Caco-2 (cell line): ENCODE measurements at regions of chr11 and their contacts with region 1.

Region 1: GRCh38 chr11:121451986-121452608 is at the start of gene SORL1:
- DNase-seq: peak; percentile 88 to 94
- H3K4me3 ChIP-seq: peak within 1 kb of the TSS; percentile 47
- H3K4me3 Mint-ChIP-seq: peak within 1 kb of the TSS; percentile 90
- H3K27ac Mint-ChIP-seq: peak within 1 kb of the TSS; percentile 58
- H3K4me1 ChIP-seq: peaks cover 30% of the 10 kb centered on the region
- H3K4me1 Mint-ChIP-seq: peaks cover 28% of the 10 kb centered on the region
- H3K27me3 ChIP-seq: no peaks in the 10 kb centered on the region
- H3K27me3 Mint-ChIP-seq: no peaks in the 10 kb centered on the region
- CTCF ChIP-seq: peak; percentile 80 to 92
- total RNA-seq, gene SORL1: 26.3 and 34.0 TPM in 2 replicates

Region 2: GRCh38 chr11:121257992-121258391 is 194.1 kb before region 1 on chr11:
- CTCF ChIA-PET with region 1: no interaction called
- POLR2A ChIA-PET with region 1: no interaction called
- intact Hi-C with region 1: loop called (anchors 5 kb)
- DNase-seq: peak in 1 of 2 experiments; percentile 65
- H3K4me3 ChIP-seq: no peak overlapping the region
- H3K4me3 Mint-ChIP-seq: peak overlapping the region; percentile 4
- H3K27ac Mint-ChIP-seq: peak overlapping the region; percentile 20
- H3K4me1 ChIP-seq: peaks cover 21% of the 10 kb centered on the region
- H3K4me1 Mint-ChIP-seq: peaks cover 18% of the 10 kb centered on the region
- H3K27me3 ChIP-seq: no peaks in the 10 kb centered on the region
- H3K27me3 Mint-ChIP-seq: no peaks in the 10 kb centered on the region
- CTCF ChIP-seq: no peak

Region 3: DNA sequence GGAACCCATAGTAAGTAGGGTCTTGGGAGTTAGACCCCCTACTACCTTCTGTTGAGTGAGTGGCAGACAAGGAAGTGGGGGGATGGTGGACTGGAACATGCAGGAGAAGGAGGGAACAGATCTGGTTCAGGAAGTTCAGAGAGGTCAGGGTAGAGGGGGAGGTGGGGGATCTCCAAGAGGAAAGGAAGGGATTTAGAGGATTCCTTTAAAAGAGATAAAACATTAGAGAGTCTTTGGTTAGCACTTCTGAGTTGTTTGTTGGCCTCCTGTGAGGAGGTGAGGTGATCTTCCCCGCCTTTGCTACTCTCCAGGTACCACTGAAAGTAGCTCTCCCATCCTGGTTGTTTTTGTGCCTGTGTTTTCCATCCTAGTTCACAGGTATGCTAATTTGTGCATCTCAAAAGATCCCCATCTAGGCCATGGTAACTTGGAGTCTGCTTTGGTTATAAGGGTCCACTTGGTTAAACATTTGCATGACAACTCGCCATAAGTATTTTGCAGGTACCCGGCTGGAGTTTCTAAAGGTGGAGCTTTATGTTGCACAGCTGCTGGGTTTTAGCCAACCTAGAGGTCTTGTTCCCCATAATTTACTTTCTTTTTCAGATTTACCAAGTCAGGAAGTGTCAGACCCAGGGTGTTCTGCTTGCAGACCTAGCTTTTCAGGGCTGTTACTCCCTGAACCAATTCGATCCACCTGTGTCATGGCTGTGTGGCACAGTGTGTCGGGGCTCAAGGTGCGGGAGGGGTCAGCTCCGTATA is 79.2 kb before region 1 on chr11:
- CTCF ChIA-PET with region 1: no interaction called
- POLR2A ChIA-PET with region 1: no interaction called
- intact Hi-C with region 1: no loop called
- DNase-seq: no peak
- H3K4me3 ChIP-seq: no peak overlapping the region
- H3K4me3 Mint-ChIP-seq: no peak overlapping the region
- H3K27ac Mint-ChIP-seq: no peak overlapping the region
- H3K4me1 ChIP-seq: no peaks in the 10 kb centered on the region
- H3K4me1 Mint-ChIP-seq: no peaks in the 10 kb centered on the region
- H3K27me3 ChIP-seq: no peaks in the 10 kb centered on the region
- H3K27me3 Mint-ChIP-seq: peaks cover 4% of the 10 kb centered on the region
- CTCF ChIP-seq: no peak

Region 4: DNA sequence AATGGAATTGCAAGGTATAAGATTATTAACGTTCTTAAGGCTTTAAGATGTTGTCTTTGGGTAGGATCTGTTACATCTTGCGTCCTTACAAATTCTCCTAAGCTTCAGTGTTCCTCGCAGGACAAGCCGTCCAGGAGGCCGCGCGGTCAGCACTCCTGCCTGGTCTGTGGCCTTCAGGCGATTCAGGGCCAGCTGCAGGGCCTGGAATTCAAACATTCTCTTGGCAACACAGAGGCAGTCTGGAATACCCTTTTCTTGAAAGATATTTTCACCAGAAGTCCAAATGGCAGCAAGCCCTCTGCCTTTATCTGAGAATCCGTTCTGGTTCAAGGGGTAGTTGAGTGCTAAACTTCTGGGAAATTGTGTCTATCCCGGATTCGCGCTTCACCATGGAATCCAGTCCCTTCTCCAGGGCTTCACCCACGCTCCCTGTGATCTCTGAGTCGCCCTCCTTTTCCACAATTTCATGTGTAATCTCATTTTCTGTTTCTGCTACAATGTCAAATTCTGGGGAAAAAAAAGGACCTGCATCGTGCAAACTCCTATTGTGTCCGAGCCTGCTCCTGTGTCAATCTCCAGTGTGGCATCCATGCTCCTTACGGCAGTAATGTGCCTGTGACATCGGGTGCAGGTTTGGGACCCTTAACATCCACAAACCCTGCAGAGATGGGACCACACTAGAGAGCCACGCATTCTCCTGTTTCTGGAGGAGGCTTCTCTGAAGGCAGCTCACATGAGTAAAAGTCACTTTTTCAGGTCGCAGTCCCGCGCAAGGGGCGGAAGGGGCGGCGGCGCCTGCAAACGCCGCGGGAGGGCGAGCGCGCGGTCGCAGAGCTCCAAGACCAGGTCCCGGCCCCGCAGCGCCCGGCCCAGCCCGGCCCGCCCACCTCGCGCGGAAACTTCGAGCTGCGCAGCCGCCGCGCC is 25.4 kb before region 1 on chr11:
- CTCF ChIA-PET with region 1: interaction called, 10 read pairs
- POLR2A ChIA-PET with region 1: no interaction called
- intact Hi-C with region 1: loop called (anchors 2 kb)
- DNase-seq: peak; percentile 66 to 75
- H3K4me3 ChIP-seq: peak overlapping the region; percentile 26
- H3K4me3 Mint-ChIP-seq: peak overlapping the region; percentile 61
- H3K27ac Mint-ChIP-seq: no peak overlapping the region
- H3K4me1 ChIP-seq: no peaks in the 10 kb centered on the region
- H3K4me1 Mint-ChIP-seq: no peaks in the 10 kb centered on the region
- H3K27me3 ChIP-seq: no peaks in the 10 kb centered on the region; the same call in 1 of the 2 replicates
- H3K27me3 Mint-ChIP-seq: peaks cover 14% of the 10 kb centered on the region
- CTCF ChIP-seq: peak; percentile 21 to 58

Region 5: GRCh38 chr11:121478895-121479697 is 27.0 kb after region 1 on chr11:
- CTCF ChIA-PET with region 1: no interaction called
- POLR2A ChIA-PET with region 1: no interaction called
- intact Hi-C with region 1: loop called (anchors 1 kb)
- DNase-seq: no peak
- H3K4me3 ChIP-seq: no peak overlapping the region
- H3K4me3 Mint-ChIP-seq: no peak overlapping the region
- H3K27ac Mint-ChIP-seq: no peak overlapping the region
- H3K4me1 ChIP-seq: peaks cover 13% of the 10 kb centered on the region
- H3K4me1 Mint-ChIP-seq: peaks cover 9% of the 10 kb centered on the region
- H3K27me3 ChIP-seq: no peaks in the 10 kb centered on the region
- H3K27me3 Mint-ChIP-seq: no peaks in the 10 kb centered on the region
- CTCF ChIP-seq: no peak

Region 6: GRCh38 chr11:121559606-121560200 is 107.6 kb after region 1 on chr11:
- CTCF ChIA-PET with region 1: no interaction called
- POLR2A ChIA-PET with region 1: no interaction called
- intact Hi-C with region 1: loop called (anchors 2 kb)
- DNase-seq: no peak
- H3K4me3 ChIP-seq: no peak overlapping the region
- H3K4me3 Mint-ChIP-seq: no peak overlapping the region
- H3K27ac Mint-ChIP-seq: peak overlapping the region; percentile 36
- H3K4me1 ChIP-seq: peaks cover 44% of the 10 kb centered on the region
- H3K4me1 Mint-ChIP-seq: peaks cover 48% of the 10 kb centered on the region
- H3K27me3 ChIP-seq: no peaks in the 10 kb centered on the region
- H3K27me3 Mint-ChIP-seq: no peaks in the 10 kb centered on the region
- CTCF ChIP-seq: no peak

Region 7: DNA sequence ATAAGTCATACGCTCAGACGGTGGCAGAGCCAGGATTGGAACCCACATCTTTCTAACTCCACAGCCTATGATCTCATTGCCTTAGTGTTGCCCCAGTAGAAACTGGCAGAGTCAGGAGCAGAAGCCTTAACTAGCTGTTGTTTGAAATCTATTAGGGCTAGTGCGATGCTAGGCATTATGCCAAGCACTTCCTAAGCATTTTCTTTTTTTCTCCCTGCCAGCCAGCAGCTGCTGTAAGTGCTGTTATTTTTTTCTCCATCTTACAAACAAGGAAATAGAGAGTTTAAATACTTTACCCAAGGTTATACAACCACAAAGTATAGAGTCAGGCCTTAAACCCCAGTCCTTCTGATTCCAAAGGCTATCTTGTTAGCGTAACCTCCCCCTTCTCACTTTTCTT is 161.6 kb after region 1 on chr11:
- CTCF ChIA-PET with region 1: no interaction called
- POLR2A ChIA-PET with region 1: no interaction called
- intact Hi-C with region 1: no loop called
- DNase-seq: no peak
- H3K4me3 ChIP-seq: no peak overlapping the region
- H3K4me3 Mint-ChIP-seq: no peak overlapping the region
- H3K27ac Mint-ChIP-seq: no peak overlapping the region
- H3K4me1 ChIP-seq: no peaks in the 10 kb centered on the region
- H3K4me1 Mint-ChIP-seq: peaks cover 8% of the 10 kb centered on the region
- H3K27me3 ChIP-seq: no peaks in the 10 kb centered on the region
- H3K27me3 Mint-ChIP-seq: no peaks in the 10 kb centered on the region
- CTCF ChIP-seq: no peak